OCI-LY7 (cell line): ENCODE measurements at regions of chrX and their contacts with region 1.

Region 1: GRCh38 chrX:47217642-47218279 is 720 bp upstream of the CDK16 start:
- DNase-seq: peak; percentile 96
- H3K4me3 ChIP-seq: peak overlapping the region; percentile 98
- H3K27ac ChIP-seq: peak overlapping the region; percentile 80
- H3K4me1 ChIP-seq: peaks cover 26% of the 10 kb centered on the region
- CTCF ChIP-seq: no peak

Region 2: DNA sequence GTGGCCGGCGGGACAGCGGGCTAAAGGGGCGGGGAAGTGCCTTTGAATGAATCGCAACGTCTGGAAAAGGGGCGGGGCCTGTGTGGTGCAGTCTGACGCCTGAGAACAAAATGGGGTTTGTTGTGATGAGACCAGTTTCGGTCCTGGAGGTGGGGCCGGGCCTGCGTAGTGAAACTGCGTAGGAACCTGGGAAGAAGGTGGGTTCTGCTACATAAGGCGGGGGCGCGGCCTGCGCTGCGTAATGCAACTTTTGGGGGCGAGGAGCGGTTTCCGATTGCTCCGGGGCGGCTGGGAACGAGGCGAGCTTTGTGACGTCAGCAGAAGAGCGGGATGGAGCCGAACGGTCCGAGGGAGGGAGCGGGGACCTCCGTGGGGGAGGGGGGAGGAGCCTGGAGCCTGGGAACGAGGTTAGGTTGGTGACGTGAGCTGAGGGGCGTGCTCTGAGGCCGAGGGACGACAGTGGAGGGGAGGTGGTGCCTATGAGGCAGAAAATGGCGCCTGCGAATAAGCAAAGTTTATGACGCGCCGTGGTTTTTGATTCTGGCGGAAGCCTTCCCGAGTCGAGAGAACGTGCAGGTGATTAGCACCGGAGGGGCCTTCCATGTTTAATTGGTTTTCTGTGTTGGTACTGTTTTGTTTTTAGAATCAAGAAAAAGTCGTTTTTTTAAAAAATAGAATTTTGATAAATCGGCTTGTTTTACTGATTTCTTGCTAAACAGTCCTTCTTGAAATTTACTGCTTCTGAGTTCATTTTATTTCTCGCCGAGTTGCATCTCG is 15.8 kb after region 1 on chrX:
- CTCF ChIA-PET with region 1: no interaction called
- POLR2A ChIA-PET with region 1: interaction called, 3 read pairs
- intact Hi-C with region 1: loop called (anchors 1 kb)
- DNase-seq: peak; percentile 90
- H3K4me3 ChIP-seq: peak overlapping the region; percentile 77
- H3K27ac ChIP-seq: peak overlapping the region; percentile 91
- H3K4me1 ChIP-seq: peaks cover 20% of the 10 kb centered on the region
- CTCF ChIP-seq: no peak

Region 3: GRCh38 chrX:47361538-47362511 is 144.1 kb after region 1 on chrX:
- CTCF ChIA-PET with region 1: no interaction called
- POLR2A ChIA-PET with region 1: no interaction called
- intact Hi-C with region 1: loop called (anchors 1 kb)
- DNase-seq: peak; percentile 93
- H3K4me3 ChIP-seq: peak overlapping the region; percentile 68
- H3K27ac ChIP-seq: peak overlapping the region; percentile 74
- H3K4me1 ChIP-seq: peaks cover 33% of the 10 kb centered on the region
- CTCF ChIP-seq: peak; percentile 47